HepG2 (cell line): ENCODE measurements at regions of chr10 and their contacts with region 1.

Region 1: DNA sequence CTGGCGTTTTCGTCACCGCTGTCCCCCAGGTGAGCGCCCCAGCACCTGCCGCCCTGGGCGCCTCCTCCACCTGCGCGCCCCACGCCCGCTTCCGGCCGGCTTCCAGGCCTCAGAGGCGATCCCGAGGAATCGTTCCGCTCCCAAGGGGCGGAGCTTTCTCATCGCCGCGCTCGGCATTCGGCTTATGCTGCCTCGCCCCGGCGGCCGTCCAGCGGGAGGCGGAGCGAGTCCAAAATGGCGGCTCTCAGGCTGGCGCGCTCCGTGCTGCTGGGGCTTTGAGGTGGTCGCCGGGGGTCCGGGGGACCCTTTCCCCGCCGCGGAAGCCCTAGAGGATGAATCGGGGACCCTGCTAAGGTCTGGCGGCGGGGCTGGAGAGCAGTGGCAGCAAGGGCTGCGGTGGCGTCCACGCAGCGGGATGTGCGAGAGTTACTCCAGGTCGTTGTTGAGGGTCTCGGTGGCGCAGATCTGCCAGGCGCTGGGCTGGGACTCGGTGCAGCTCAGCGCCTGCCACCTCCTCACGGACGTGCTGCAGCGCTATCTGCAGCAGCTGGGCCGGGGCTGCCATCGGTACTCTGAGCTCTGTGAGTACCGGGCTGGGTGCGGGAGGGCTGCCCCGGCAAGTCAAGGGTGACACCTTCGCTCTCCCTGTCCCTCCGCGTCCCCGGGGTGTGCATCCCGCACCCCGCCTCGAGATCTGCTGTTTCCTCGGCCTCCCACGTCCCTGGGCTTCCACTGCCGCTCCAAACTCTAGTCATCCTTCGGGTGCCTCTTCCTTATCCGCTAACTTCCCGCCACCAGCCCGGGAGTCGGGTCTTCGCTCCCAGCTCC is at the start of gene TAF3:
- DNase-seq: peak; percentile 81
- ATAC-seq: peak; percentile 82
- H3K4me3 ChIP-seq: peak within 1 kb of the TSS; percentile 78 to 99 (median 96)
- H3K27ac ChIP-seq: peak within 1 kb of the TSS; percentile 54
- H3K4me1 ChIP-seq: peaks cover 37% of the 10 kb centered on the region
- H3K27me3 ChIP-seq: no peaks in the 10 kb centered on the region; a peak in 1 of 5 replicates
- CTCF ChIP-seq: peak; percentile 28; the same call in 1 of the 2 replicates
- EP300 ChIP-seq: peak; percentile 32 to 36; a peak in 1 of 4 replicates
- POLR2A ChIP-seq: peak; percentile 70 to 95
- RAD21 ChIP-seq: peak; percentile 24; the same call in 1 of the 2 replicates
- total RNA-seq, gene TAF3: 2.9 TPM in 2 replicates

Region 2: GRCh38 chr10:7756360-7756992 is 62.0 kb before region 1 on chr10:
- CTCF ChIA-PET with region 1: no interaction called
- POLR2A ChIA-PET with region 1: no interaction called
- in situ Hi-C with region 1: no loop called
- intact Hi-C with region 1: loop called (anchors 5 kb)
- DNase-seq: peak; percentile 41
- ATAC-seq: peak; percentile 87
- H3K4me3 ChIP-seq: no peak overlapping the region
- H3K27ac ChIP-seq: no peak overlapping the region
- H3K4me1 ChIP-seq: no peaks in the 10 kb centered on the region
- H3K27me3 ChIP-seq: no peaks in the 10 kb centered on the region
- CTCF ChIP-seq: peak; percentile 73
- EP300 ChIP-seq: no peak
- POLR2A ChIP-seq: no peak
- RAD21 ChIP-seq: peak; percentile 54; the same call in 1 of the 2 replicates

Region 3: DNA sequence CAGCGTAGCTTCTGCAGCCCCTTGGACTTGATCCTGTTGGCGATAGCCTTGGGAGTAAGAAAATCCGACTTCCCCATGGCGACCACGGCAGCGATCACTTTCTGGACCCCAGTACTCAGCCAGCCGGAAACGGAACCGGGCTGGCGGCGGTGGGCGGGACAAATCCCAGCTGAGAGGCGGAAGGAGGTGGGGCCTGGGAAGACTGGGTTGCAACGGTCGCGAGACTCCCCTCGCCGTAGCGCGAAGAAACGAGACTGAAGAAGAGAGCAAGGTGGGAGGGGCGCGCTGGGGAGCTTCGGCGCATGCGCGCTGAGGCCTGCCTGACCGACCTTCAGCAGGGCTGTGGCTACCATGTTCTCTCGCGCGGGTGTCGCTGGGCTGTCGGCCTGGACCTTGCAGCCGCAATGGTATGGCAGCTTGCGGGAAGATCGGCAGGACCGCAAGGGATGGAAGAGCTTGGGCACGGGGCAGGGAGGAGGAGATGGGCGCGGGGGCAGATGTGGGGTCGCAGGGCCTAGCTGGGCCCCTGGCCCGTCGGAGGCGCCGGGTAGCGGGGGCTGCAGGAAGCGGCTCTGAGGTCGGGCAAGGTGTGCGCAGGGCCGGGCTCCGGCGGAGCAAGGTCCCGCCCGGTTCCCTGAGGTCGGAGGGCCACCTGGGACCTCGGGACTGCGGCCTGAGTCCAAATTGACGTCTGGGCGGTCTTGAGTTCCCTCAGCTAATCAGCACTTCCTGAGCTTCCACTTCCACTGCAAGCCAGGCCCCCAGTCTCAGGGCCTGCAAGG is 30.5 kb before region 1 on chr10 and contains the starts of genes ATP5F1C and KIN:
- CTCF ChIA-PET with region 1: no interaction called
- POLR2A ChIA-PET with region 1: interaction called, 56 read pairs
- in situ Hi-C with region 1: no loop called
- intact Hi-C with region 1: loop called (anchors 2 kb)
- DNase-seq: peak; percentile 94
- ATAC-seq: peak; percentile 96
- H3K4me3 ChIP-seq: peak within 1 kb of the TSS; percentile 72 to 99 (median 96)
- H3K27ac ChIP-seq: peak within 1 kb of the TSS; percentile 87
- H3K4me1 ChIP-seq: peaks cover 62% of the 10 kb centered on the region
- H3K27me3 ChIP-seq: no peaks in the 10 kb centered on the region; a peak in 1 of 5 replicates
- CTCF ChIP-seq: no peak
- EP300 ChIP-seq: no peak
- POLR2A ChIP-seq: peak; percentile 90 to 96
- RAD21 ChIP-seq: peak; percentile 45
- total RNA-seq, gene ATP5F1C: 416 and 578 TPM in 2 replicates
- total RNA-seq, gene KIN: 23.2 and 34.6 TPM in 2 replicates

Region 4: GRCh38 chr10:7932301-7933036 is 114.0 kb after region 1 on chr10:
- CTCF ChIA-PET with region 1: no interaction called
- POLR2A ChIA-PET with region 1: no interaction called
- in situ Hi-C with region 1: no loop called
- intact Hi-C with region 1: no loop called
- DNase-seq: peak; percentile 98
- ATAC-seq: peak; percentile 100
- H3K4me3 ChIP-seq: peak overlapping the region in 2 of 3 experiments; percentile 29 to 45; a peak in 3 of 6 replicates
- H3K27ac ChIP-seq: peak overlapping the region; percentile 74
- H3K4me1 ChIP-seq: peaks cover 46% of the 10 kb centered on the region
- H3K27me3 ChIP-seq: no peaks in the 10 kb centered on the region
- CTCF ChIP-seq: no peak
- EP300 ChIP-seq: peak in 1 of 2 experiments; percentile 88; a peak in 2 of 4 replicates
- POLR2A ChIP-seq: no peak
- RAD21 ChIP-seq: no peak